ENCODE measurements at regions of chr10 and their contacts with region 1.

Region 1: DNA sequence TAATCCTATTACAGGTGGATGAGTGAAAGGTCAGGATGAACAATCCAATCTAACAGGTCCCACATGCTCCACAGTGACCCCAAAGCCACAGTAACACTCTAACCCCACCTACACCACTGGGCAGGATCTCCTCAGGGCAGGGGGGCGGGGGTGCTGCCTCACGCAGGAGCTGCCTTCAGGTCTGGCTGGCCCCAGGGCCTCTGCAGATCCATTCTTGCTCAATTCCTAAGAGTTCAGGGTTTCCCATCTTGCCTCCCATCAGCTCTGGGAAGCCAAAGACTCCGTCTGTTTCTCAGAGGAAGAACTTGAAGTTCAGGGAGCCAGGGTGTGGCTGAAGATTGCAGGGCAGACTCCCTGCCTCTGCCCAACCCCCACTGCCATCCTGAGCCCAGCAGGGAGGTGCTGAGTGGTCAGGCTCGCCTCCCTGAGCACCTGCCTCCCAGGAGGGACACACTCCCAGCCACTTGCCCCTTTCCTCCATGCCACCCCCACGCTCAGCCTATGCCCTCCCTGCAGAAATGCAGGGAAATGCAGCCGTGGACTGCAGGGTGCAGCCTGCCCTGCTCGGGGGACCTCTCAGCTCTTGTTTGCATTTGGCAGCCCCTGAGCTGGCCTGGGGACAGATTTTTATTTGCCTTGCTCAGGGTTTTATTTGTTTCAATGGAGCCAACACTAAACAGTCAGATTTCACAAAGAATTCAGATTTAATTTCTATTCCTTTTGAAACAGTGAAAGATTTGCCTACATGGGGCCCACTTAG is 9.9 kb upstream of the COMTD1 start:
- DNase-seq: no peak
- ATAC-seq: no peak

Region 2: GRCh38 chr10:74275755-74276290 is 969.8 kb before region 1 on chr10:
- intact Hi-C with region 1: loop called in 1 of 2 experiments (anchors 10 kb)
- DNase-seq: no peak
- ATAC-seq: no peak

Region 3: GRCh38 chr10:75444781-75445386 is 199.2 kb after region 1 on chr10:
- intact Hi-C with region 1: no loop called
- DNase-seq: no peak
- ATAC-seq: no peak

Measured in left cardiac atrium (tissue), 4 donors.